Posterior cingulate gyrus (tissue), 11 donors: ENCODE measurements at regions of chr6 and their contacts with region 1.

Region 1: DNA sequence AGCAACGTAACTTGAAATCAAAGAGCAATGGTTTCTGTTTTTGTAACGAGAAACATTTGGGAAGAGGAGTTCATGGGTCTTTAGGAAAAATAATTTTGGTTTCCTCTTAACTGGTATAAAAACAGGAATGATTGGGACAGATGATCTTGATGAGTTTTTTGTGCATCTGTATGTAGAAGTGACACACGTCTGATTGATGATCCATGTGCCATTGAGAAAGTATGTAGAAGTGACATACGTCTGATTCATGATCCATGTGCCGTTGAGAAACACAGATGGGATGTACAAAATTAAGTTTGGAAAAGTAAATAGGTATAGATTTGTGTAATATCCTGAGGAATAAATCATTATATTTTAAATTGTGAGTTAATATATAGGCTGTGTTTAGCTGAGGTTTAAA is 2.1 kb downstream of the KIAA1586 start:
- DNase-seq: no peak

Region 2: GRCh38 chr6:56604186-56604585 is 444.4 kb before region 1 on chr6:
- intact Hi-C with region 1: no loop called
- DNase-seq: no peak

Region 3: DNA sequence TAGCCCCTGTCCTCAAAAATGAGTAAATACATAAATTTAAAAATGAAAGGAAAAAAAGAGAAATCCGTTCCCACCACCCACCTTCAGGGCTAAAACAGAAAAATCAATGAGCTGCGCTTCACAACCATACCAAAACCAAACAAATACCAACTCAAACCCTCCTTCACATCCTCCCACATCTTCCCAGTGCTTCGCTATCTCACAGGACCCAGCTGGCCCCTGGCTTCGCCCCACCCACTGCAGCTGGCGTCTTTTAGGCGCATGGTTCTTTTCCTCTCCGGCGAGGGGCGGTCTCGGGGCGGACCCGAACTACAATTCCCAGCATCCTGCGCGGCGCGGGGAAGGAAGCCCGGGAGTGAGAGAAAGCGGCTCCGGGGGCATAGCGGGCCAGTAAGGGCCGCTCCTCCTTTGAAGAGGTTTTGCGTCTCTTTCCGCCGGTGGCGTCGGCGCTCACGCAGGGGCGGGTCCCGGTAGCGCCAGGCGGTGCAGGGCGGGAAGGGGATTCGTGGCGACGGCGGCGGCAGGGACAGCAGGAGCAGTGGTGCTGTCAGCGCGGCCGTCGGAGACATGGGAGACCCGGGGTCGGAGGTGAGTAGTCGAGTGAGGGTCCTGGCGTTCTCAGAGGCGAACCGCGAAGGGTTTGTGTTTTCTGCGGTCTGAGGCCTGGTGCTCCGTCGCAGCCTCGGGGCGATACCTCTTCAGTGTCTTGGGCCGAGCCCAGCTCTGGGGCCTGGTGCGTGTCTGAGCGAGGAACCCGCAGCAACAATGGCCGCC is 41.3 kb after region 1 on chr6 and contains the start of gene ZNF451:
- intact Hi-C with region 1: loop called (anchors 5 kb)
- DNase-seq: peak; percentile 97 to 100 (median 98)

Region 4: DNA sequence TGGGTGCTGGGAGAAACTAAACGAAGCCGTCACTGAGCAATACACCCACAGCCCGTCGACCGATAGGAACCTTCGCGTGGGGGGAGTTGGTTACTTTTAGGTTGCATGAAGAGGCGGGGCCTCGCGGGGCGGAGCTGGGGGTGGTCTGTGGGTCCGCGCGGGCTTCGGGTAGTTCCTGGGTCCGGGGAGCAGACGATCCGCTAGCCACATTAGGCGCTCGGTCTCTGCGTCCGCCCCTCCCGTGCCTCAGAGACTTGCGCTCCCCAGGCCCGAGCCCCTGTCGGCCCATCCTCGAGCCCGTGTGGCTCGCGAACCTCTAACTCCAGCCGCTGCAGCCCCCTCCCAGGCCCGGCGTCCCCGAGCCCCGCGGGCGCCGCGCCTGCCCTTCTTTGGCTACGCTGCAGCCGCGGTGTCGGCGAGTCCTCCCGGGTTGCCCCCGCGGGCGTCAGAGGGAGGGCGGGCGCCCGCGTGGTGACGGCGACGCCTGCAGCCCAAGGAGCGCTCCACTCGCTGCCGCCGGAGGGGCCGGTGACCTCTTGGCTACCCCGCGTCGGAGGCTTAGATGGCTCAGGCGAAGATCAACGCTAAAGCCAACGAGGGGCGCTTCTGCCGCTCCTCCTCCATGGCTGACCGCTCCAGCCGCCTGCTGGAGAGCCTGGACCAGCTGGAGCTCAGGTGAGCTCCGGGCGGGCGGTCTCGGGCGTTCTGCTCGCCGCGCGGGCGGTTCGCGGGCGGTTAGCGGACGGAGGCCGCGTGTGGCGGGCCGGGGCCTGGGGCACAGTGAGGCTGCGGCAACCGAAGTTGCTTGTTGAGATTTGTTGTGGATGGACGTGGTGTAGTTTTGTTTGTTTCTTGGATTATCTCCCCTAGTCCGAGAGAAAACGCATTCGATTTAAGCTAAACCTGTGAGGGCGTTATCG is 123.8 kb after region 1 on chr6 and contains the start of gene BAG2:
- intact Hi-C with region 1: loop called (anchors 2 kb)
- DNase-seq: peak; percentile 58 to 97 (median 76)